Right ventricle myocardium inferior (tissue), 1 donor: ENCODE measurements at regions of chr6 and their contacts with region 1.

Region 1: GRCh38 chr6:45922728-45923351 is 92.8 kb downstream of the CLIC5 start:
- DNase-seq: no peak
- ATAC-seq: peak; percentile 81

Region 2: DNA sequence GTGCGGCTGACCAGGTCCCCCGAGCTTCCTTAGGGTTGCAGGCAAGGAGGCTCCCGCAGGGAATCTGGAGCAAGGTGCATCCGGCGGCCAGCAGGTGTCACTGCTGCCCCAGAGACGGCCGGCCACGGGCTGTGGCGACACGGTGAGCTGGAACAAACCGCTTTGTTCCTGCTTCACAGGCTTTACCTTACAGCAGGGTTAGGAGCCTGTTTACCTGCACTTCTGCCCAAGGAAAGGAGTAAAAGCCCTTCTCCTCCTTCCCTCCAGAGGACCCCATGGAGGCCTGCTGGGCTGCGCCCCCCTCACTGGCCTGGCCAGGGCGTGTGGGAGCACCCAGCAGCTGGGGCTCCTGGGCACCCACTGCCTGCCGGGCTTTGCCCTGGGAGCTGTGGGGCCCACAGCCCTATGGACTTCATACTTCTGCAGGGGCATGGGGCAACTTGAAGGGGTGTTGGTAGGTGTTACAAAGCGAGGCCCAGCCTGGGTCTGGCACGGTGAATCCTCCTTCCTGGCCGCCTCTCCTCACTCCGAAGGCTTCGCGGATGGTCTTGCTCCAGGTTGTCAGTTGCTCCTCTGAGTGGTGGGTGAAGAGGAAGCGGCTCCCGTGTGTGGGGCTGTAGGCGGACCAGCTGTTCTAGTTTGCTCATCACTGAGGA is 1446.9 kb before region 1 on chr6:
- intact Hi-C with region 1: loop called (anchors 10 kb)
- DNase-seq: peak; percentile 85
- ATAC-seq: peak; percentile 77

Region 3: GRCh38 chr6:44655412-44656342 is 1267.2 kb before region 1 on chr6:
- intact Hi-C with region 1: loop called (anchors 5 kb)
- DNase-seq: peak; percentile 75
- ATAC-seq: peak; percentile 72

Region 4: GRCh38 chr6:46203391-46204177 is 280.7 kb after region 1 on chr6:
- intact Hi-C with region 1: loop called (anchors 10 kb)
- DNase-seq: no peak
- ATAC-seq: no peak

Region 5: DNA sequence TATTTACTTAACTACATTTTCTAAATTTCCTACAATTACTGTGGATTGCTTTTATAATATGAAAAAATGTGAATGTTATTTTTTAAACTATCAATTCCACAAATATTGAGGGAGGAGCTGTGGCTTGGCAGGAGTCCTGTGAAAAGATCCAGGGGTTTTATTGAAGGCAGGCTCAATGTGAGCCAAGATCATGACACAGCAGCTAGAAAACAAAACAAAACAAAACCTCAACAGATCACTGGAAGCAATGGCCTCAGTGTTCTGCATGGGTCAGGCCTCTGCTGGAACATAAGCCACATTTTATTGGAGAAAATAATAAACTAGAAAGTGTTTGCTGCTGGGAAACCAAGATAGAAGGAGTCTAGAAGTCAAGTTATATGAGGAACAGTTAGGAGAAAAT is 587.8 kb after region 1 on chr6:
- intact Hi-C with region 1: no loop called
- DNase-seq: no peak
- ATAC-seq: peak; percentile 43